Cardiac septum (tissue), 1 donor: ENCODE measurements at regions of chr5 and their contacts with region 1.

Region 1: DNA sequence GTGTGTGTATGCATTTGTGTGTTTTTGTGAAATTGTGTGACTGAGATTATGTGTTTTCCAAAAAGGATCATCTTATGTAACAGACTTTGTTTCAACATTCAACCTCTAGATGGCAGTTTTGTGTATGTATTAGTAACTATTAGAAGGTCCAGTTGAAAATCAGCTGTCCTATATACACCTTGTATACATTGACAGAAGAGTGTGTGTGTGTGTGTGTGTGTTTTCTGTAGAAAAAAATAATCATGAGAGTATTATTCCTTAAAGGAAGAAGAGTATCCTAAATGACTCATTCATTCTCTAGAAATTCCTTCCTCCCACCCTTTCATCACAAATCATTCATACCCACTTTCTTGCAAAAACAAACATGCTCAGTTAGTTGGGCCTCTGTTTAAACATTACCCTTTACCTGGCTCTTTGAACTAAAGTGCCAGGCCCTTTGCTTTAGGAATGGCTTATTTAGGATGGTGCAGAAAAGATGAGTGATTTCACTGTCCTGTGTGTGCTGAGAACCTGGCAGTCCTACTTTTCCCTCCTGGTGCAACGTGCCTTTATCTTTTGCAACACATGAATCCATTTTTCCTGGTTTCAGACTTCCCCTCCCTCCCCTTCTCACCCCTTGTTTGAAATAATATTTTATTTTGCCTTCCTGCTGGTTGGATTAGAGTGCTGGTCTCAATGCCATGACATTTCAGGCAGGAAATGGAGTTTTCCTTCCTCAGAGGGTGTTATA is 152.2 kb downstream of the ARHGAP26 start:
- DNase-seq: no peak

Region 2: DNA sequence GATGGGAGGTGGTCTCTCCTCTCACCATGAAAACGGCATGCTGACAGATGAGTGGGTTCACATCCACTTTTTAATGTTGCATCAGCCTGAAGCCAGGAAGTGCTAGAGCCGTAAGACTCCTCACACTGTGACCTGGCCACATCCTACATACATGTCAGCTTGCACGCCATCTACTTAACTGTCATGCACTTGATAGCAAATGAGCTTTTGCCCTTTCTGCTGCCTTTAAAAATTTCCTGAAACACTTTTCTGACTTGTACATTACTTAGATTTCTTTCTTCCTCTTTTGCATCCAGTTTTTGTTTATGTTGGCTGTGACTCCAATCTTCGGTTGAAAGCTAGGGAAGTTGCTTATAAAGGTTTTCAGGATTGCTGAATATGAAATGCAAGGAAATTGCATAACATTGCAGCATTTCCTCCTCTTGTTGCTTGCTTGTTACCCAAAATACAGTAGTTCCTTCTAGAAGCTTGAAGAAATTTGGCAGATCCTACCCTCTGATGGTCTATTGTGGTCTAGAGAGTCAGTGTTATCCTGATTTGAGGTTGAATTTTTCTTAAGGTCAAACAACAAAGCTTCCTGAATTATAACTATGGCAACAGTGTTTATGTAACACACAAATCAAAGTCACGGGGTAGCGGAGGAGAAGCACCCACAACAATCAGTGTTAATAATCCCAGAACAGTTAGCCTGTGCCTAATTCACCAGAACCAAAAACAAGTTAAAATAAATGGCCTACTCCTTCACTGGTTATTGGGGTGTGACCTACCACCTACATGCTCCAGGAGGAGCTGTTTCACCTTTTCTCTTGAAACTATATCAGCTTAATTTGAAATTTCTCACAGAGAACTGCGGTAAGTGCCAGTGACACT is 80.3 kb after region 1 on chr5:
- intact Hi-C with region 1: loop called (anchors 2 kb)
- DNase-seq: no peak

Region 3: GRCh38 chr5:143063175-143063970 is 141.0 kb after region 1 on chr5:
- intact Hi-C with region 1: loop called (anchors 5 kb)
- DNase-seq: no peak

Region 4: DNA sequence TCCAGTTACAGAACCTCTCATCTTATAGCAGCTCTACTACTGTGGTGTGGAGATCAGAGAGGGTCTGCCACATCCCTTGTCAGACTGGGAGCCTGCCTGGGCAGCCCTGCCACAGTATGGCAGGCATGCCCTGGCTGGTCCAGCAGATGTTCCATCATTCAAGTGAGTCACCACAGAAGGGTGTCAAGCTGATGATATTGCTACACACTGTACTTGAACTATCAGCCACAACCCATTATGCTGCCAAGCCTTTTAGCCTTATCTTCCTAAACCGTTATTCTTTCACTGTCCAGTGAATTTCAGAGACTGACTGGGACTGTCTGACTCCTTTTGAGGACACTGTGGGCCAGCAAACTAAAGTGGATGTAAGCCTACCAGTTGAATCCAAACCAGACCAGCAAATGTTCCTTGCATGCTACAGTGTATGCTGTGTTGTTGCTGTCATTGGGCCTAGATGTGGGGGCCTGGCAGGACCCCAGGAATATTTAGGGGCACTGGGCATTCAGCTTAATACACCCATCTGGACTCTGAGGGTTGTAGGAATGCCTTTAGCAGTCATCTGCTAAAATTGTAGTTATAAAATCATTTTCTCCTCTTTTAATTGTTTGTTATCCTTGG is 278.5 kb after region 1 on chr5:
- intact Hi-C with region 1: loop called (anchors 10 kb)
- DNase-seq: no peak

Region 5: DNA sequence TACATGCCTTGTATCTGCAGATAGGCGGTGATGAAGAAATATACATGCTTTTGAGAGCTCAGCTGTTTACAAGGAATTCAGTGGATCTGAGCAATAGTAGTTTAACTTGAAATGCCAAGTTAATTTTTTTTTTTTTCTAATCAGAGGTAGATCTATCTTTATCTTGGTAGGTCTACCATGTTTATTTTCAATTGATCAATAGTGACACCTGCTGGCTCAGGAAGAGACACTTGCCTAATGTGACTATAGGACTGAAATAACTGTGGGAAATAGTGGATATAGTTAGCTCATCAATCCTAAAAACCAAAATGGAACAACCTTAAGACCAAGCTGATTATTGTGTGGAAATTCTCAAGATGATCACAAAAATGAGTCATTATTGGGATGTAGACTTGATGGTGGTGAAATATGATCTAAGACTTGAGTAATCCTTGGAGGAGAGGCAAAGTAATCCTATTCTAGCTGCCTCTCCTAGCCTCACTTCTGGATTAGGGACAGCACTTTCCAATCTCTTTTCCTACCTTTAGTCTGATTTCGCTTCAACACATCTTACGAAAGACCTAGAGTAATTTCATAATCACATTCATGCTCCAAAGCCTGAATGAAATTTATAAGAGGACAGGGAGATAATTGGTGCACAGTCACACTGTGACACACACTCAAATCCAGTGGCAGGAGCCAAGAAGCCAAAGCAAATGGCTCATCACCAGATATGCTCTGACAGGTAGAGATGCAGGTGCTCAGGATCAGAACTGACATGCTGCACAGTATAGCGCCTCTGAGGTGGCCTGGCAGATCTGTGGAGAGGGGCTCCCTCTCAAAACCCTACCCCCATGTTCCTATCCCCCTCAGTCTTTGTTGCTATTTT is 1045.9 kb after region 1 on chr5:
- intact Hi-C with region 1: loop called (anchors 10 kb)
- DNase-seq: no peak

Region 6: GRCh38 chr5:144142139-144142823 is 1219.9 kb after region 1 on chr5:
- intact Hi-C with region 1: loop called (anchors 5 kb)
- DNase-seq: no peak